Naive thymus-derived CD4-positive, alpha-beta T cell (primary cell): ENCODE measurements at regions of chr17 and their contacts with region 1.

Region 1: DNA sequence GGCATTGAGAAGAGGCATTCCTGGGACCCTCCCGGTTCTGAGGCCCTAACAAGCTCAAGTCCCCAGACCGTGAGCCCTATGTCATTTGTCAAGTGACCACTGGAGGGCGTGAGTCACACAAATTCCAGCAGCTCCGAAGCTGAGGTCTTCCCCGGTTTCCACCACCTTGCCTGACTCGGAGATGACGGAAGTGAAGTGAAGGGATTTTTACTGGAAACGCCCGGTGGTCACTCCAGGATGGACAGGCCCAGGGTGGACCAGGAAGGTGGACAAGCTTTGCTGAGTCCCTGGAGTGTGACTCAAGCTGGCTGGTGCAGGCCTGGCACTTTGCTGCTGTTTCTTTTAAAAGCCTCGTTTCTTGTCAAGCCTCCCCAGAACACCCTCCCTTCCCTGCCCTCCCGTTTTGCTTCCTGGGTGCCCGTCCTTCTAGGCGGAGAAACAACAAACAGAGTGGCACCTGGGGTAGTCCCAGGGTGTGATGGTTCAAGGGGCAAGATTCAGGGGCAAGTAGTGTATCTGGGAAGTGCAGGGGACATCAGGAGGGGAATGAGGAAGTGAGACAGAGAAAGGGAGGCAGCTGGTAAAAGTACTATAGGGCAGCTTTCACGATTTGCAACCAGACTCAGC is 5.3 kb upstream of the NOS2 start:
- DNase-seq: peak; percentile 60 to 87 (median 79)
- ATAC-seq: peak; percentile 83
- H3K4me3 ChIP-seq: peak overlapping the region; percentile 57
- H3K4me3 Mint-ChIP-seq: peak overlapping the region; percentile 77 to 90 (median 85)
- H3K27ac ChIP-seq: peak overlapping the region; percentile 70
- H3K27ac Mint-ChIP-seq: peak overlapping the region; percentile 81 to 98 (median 95)
- H3K4me1 ChIP-seq: peaks cover 24 to 25% of the 10 kb centered on the region in 2 donors
- H3K4me1 Mint-ChIP-seq: peaks cover 20 to 45% (median 29%) of the 10 kb centered on the region in 7 donors
- H3K27me3 ChIP-seq: no peaks in the 10 kb centered on the region
- H3K27me3 Mint-ChIP-seq: peaks cover 0 to 5% (median 0%) of the 10 kb centered on the region in 5 donors

Region 2: DNA sequence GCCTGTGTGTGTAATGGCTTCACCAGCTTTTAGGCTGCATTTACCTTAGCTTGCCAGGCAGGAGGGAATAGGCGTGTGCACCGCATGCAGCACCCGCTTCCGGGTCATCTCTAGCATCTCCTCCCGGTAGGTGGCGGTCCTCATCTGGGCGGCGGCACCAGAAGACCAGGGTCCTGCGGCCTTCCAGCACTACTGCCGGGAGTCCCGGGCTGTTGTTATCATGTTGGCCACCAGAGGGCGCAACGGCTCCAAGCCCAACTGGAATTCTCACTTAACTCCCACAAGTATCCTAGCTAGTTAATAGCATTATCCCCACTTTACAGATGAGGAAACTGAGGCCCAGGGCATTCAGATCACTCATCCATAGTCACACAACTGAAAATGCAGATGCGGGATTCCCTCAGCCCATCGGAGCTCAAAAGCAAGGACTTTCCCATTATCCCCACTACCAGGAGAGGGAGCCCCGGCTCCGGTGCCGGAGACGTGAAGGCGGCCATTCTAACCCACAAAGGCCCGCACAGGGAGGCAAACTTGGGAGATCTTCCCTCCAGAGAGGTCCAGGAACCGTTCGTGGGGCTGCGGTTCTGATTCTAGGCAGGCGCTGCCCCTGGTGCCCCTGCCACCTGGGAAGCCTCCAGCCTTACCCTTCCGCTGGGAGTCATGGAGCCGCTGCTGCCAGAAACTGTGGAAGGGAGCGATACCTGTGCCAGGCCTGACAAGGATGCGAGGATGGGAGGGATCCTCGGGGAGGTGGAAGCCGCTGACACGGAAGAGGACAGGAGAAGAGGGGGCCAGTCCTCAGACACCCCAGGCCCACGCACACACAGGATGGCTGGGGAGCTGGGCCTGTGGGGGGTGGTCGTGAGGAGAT is 150.7 kb before region 1 on chr17:
- CTCF ChIA-PET with region 1: no interaction called
- POLR2A ChIA-PET with region 1: no interaction called
- intact Hi-C with region 1: loop called in 1 of 2 experiments (anchors 5 kb)
- DNase-seq: peak; percentile 22 to 74 (median 45)
- ATAC-seq: peak; percentile 75
- H3K4me3 ChIP-seq: no peak overlapping the region
- H3K4me3 Mint-ChIP-seq: peak overlapping the region in 1 of 10 donors; percentile 0
- H3K27ac ChIP-seq: no peak overlapping the region
- H3K27ac Mint-ChIP-seq: peak overlapping the region in 1 of 9 donors; percentile 43
- H3K4me1 ChIP-seq: no peaks in the 10 kb centered on the region
- H3K4me1 Mint-ChIP-seq: peaks cover 3 to 10% (median 8%) of the 10 kb centered on the region in 7 donors
- H3K27me3 ChIP-seq: no peaks in the 10 kb centered on the region
- H3K27me3 Mint-ChIP-seq: peaks cover 0 to 13% (median 0%) of the 10 kb centered on the region in 5 donors

Region 3: DNA sequence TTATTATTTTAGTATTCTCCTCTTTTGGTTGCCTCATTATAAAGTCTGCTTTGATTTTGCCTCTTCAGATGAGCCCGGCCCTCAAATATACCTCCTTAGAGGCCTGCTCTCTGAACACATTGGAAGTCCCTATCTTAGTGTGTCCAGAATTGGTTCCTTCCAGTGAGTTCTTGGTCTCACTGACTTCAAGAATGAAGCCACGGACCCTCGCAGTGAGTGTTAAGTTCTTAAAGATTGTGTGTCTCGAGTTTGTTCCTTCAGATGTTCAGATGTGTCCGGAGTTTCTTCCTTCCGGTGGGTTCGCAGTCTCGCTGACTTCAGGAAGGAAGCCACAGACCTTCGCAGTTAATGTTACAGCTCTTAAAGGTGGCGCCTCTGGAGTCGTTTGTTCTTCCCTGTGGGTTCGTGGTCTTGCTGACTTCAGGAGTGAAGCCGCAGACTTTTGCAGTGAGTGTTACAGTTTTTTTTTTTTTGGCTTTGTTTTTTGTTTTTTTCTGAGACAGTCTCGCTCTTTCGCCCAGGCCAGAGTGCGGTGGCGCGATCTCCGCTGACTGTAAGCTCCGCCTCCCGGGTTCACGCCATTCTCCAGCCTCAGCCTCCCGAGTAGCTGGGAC is 40.5 kb after region 1 on chr17:
- CTCF ChIA-PET with region 1: interaction called, 3 read pairs
- POLR2A ChIA-PET with region 1: interaction called, 4 read pairs
- intact Hi-C with region 1: loop called (anchors 1 to 2 kb)
- DNase-seq: peak in 7 of 9 donors; percentile 18 to 35 (median 28)
- ATAC-seq: peak; percentile 66
- H3K4me3 ChIP-seq: peak overlapping the region; percentile 34
- H3K4me3 Mint-ChIP-seq: peak overlapping the region; percentile 73 to 89 (median 80)
- H3K27ac ChIP-seq: peak overlapping the region; percentile 2
- H3K27ac Mint-ChIP-seq: peak overlapping the region; percentile 71 to 89 (median 86)
- H3K4me1 ChIP-seq: peaks cover 9% of the 10 kb centered on the region in 2 donors
- H3K4me1 Mint-ChIP-seq: peaks cover 5 to 32% (median 29%) of the 10 kb centered on the region in 7 donors
- H3K27me3 ChIP-seq: no peaks in the 10 kb centered on the region
- H3K27me3 Mint-ChIP-seq: peaks cover 0 to 12% (median 0%) of the 10 kb centered on the region in 5 donors

Region 4: GRCh38 chr17:27892866-27893769 is 87.5 kb after region 1 on chr17 and contains the start of gene LYRM9:
- CTCF ChIA-PET with region 1: interaction called, 119 read pairs
- POLR2A ChIA-PET with region 1: interaction called, 88 read pairs
- intact Hi-C with region 1: loop called (anchors 1 kb)
- DNase-seq: peak; percentile 87 to 99 (median 93)
- ATAC-seq: peak; percentile 100
- H3K4me3 ChIP-seq: peak within 1 kb of the TSS; percentile 80
- H3K4me3 Mint-ChIP-seq: peak within 1 kb of the TSS; percentile 76 to 95 (median 88)
- H3K27ac ChIP-seq: peak within 1 kb of the TSS; percentile 73
- H3K27ac Mint-ChIP-seq: peak within 1 kb of the TSS; percentile 69 to 89 (median 84)
- H3K4me1 ChIP-seq: peaks cover 0 to 13% of the 10 kb centered on the region in 2 donors
- H3K4me1 Mint-ChIP-seq: peaks cover 15 to 29% (median 26%) of the 10 kb centered on the region in 7 donors
- H3K27me3 ChIP-seq: no peaks in the 10 kb centered on the region
- H3K27me3 Mint-ChIP-seq: peaks cover 15 to 45% (median 19%) of the 10 kb centered on the region in 5 donors
- total RNA-seq, gene LYRM9: 4.2 to 24.5 (median 14.0) TPM

Region 5: DNA sequence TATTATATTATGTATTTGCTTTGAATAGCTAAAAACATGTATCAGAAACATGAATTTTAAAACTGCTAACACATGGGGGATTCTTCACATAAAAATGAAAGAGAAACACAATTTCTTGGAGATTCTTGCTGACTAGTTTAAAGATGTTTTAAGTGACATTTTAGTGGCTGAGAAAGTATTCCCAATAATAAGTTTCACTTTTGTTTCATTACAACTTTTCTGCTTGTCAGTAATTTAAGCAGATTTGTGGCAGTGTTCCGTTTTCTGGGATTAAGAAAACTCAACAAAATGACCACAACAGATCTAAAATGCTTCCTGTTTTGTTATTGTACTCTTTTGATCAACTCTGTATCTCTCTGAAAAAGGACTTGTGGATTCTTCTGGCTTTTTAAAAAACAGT is 312.7 kb after region 1 on chr17:
- CTCF ChIA-PET with region 1: no interaction called
- POLR2A ChIA-PET with region 1: no interaction called
- intact Hi-C with region 1: no loop called
- DNase-seq: no peak
- ATAC-seq: no peak
- H3K4me3 ChIP-seq: peak overlapping the region; percentile 1
- H3K4me3 Mint-ChIP-seq: peak overlapping the region in 7 of 10 donors; percentile 3 to 71 (median 42)
- H3K27ac ChIP-seq: no peak overlapping the region
- H3K27ac Mint-ChIP-seq: peak overlapping the region in 5 of 9 donors; percentile 32 to 80 (median 47)
- H3K4me1 ChIP-seq: peaks cover 5 to 11% of the 10 kb centered on the region in 2 donors
- H3K4me1 Mint-ChIP-seq: peaks cover 10 to 51% (median 33%) of the 10 kb centered on the region in 7 donors
- H3K27me3 ChIP-seq: no peaks in the 10 kb centered on the region
- H3K27me3 Mint-ChIP-seq: no peaks in the 10 kb centered on the region

Region 6: GRCh38 chr17:28252436-28252835 is 446.8 kb after region 1 on chr17:
- CTCF ChIA-PET with region 1: interaction called, 16 read pairs
- POLR2A ChIA-PET with region 1: no interaction called
- intact Hi-C with region 1: loop called in 1 of 2 experiments (anchors 1 kb)
- DNase-seq: no peak
- ATAC-seq: no peak
- H3K4me3 ChIP-seq: no peak overlapping the region
- H3K4me3 Mint-ChIP-seq: peak overlapping the region in 2 of 10 donors; percentile 84 to 86
- H3K27ac ChIP-seq: no peak overlapping the region
- H3K27ac Mint-ChIP-seq: peak overlapping the region in 1 of 9 donors; percentile 4
- H3K4me1 ChIP-seq: peaks cover 0 to 4% of the 10 kb centered on the region in 2 donors
- H3K4me1 Mint-ChIP-seq: peaks cover 6 to 10% (median 8%) of the 10 kb centered on the region in 7 donors
- H3K27me3 ChIP-seq: no peaks in the 10 kb centered on the region
- H3K27me3 Mint-ChIP-seq: peaks cover 4 to 23% (median 9%) of the 10 kb centered on the region in 5 donors

Region 7: GRCh38 chr17:28416703-28417311 is 611.2 kb after region 1 on chr17:
- CTCF ChIA-PET with region 1: interaction called, 6 read pairs
- POLR2A ChIA-PET with region 1: no interaction called
- intact Hi-C with region 1: loop called in 1 of 2 experiments (anchors 2 kb)
- DNase-seq: peak; percentile 18 to 58 (median 40)
- ATAC-seq: peak; percentile 89
- H3K4me3 ChIP-seq: no peak overlapping the region
- H3K4me3 Mint-ChIP-seq: peak overlapping the region in 1 of 10 donors; percentile 12
- H3K27ac ChIP-seq: no peak overlapping the region
- H3K27ac Mint-ChIP-seq: no peak overlapping the region
- H3K4me1 ChIP-seq: no peaks in the 10 kb centered on the region
- H3K4me1 Mint-ChIP-seq: peaks cover 0 to 6% (median 4%) of the 10 kb centered on the region in 7 donors
- H3K27me3 ChIP-seq: no peaks in the 10 kb centered on the region
- H3K27me3 Mint-ChIP-seq: peaks cover 0 to 27% (median 8%) of the 10 kb centered on the region in 5 donors